ENCODE measurements at regions of chr7 and their contacts with region 1.

Region 1: GRCh38 chr7:157502701-157503111 is 165.9 kb downstream of the DNAJB6 start:
- DNase-seq: peak; percentile 86
- H3K4me3 ChIP-seq: peak overlapping the region in 1 of 3 experiments; percentile 8
- H3K27ac ChIP-seq: peak overlapping the region; percentile 61
- H3K4me1 ChIP-seq: peaks cover 9% of the 10 kb centered on the region
- H3K27me3 ChIP-seq: no peaks in the 10 kb centered on the region
- CTCF ChIP-seq: no peak
- POLR2A ChIP-seq: no peak

Region 2: GRCh38 chr7:157150882-157151281 is 351.8 kb before region 1 on chr7:
- CTCF ChIA-PET with region 1: no interaction called
- POLR2A ChIA-PET with region 1: no interaction called
- dilution Hi-C with region 1: no loop called
- intact Hi-C with region 1: no loop called
- DNase-seq: no peak
- H3K4me3 ChIP-seq: no peak overlapping the region
- H3K27ac ChIP-seq: no peak overlapping the region
- H3K4me1 ChIP-seq: peaks cover 4% of the 10 kb centered on the region
- H3K27me3 ChIP-seq: no peaks in the 10 kb centered on the region
- CTCF ChIP-seq: no peak
- POLR2A ChIP-seq: no peak

Region 3: GRCh38 chr7:157477550-157478212 is 25.0 kb before region 1 on chr7:
- CTCF ChIA-PET with region 1: no interaction called
- POLR2A ChIA-PET with region 1: no interaction called
- dilution Hi-C with region 1: no loop called
- intact Hi-C with region 1: no loop called
- DNase-seq: no peak
- H3K4me3 ChIP-seq: no peak overlapping the region
- H3K27ac ChIP-seq: no peak overlapping the region
- H3K4me1 ChIP-seq: no peaks in the 10 kb centered on the region
- H3K27me3 ChIP-seq: no peaks in the 10 kb centered on the region
- CTCF ChIP-seq: no peak
- POLR2A ChIP-seq: no peak

Region 4: GRCh38 chr7:157568770-157569584 is 66.3 kb after region 1 on chr7:
- CTCF ChIA-PET with region 1: no interaction called
- POLR2A ChIA-PET with region 1: no interaction called
- dilution Hi-C with region 1: no loop called
- intact Hi-C with region 1: loop called (anchors 1 kb)
- DNase-seq: peak; percentile 11
- H3K4me3 ChIP-seq: peak overlapping the region; percentile 4 to 35 (median 29)
- H3K27ac ChIP-seq: no peak overlapping the region
- H3K4me1 ChIP-seq: no peaks in the 10 kb centered on the region
- H3K27me3 ChIP-seq: no peaks in the 10 kb centered on the region
- CTCF ChIP-seq: no peak
- POLR2A ChIP-seq: no peak

Measured in endothelial cell of umbilical vein (primary cell).